Ascending aorta (tissue), 2 donors: ENCODE measurements at regions of chr11 and their contacts with region 1.

Region 1: GRCh38 chr11:77091146-77091940 is 11.3 kb upstream of the OMP start:
- DNase-seq: peak in 1 of 2 donors; percentile 88
- H3K4me3 ChIP-seq: no peak overlapping the region
- H3K27ac ChIP-seq: no peak overlapping the region
- H3K4me1 ChIP-seq: no peaks in the 10 kb centered on the region
- H3K27me3 ChIP-seq: no peaks in the 10 kb centered on the region
- CTCF ChIP-seq: peak; percentile 88 to 92 (median 92)

Region 2: GRCh38 chr11:76962583-76963416 is 128.5 kb before region 1 on chr11:
- intact Hi-C with region 1: no loop called
- DNase-seq: no peak
- H3K4me3 ChIP-seq: no peak overlapping the region
- H3K27ac ChIP-seq: no peak overlapping the region
- H3K4me1 ChIP-seq: no peaks in the 10 kb centered on the region
- H3K27me3 ChIP-seq: no peaks in the 10 kb centered on the region
- CTCF ChIP-seq: no peak

Region 3: DNA sequence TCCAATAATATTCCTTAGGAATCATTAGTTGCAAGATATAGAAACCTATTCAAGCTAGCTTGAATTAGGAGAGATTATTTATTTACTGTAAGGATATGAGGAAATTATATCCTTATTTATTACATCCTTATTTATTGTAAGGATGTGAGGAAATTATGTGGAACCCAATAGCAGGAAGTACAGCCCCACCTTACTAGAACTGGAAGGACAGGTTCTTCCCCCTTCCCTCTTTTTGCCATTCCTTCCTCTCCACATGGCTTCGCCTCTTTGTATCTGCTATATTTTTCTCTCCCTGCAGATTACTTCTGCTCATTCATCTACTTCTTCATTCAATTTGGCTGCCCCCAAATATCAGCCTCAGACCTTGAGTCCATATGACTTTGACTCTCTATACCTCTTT is 106.6 kb before region 1 on chr11:
- intact Hi-C with region 1: no loop called
- DNase-seq: no peak
- H3K4me3 ChIP-seq: no peak overlapping the region
- H3K27ac ChIP-seq: no peak overlapping the region
- H3K4me1 ChIP-seq: no peaks in the 10 kb centered on the region
- H3K27me3 ChIP-seq: no peaks in the 10 kb centered on the region
- CTCF ChIP-seq: no peak

Region 4: DNA sequence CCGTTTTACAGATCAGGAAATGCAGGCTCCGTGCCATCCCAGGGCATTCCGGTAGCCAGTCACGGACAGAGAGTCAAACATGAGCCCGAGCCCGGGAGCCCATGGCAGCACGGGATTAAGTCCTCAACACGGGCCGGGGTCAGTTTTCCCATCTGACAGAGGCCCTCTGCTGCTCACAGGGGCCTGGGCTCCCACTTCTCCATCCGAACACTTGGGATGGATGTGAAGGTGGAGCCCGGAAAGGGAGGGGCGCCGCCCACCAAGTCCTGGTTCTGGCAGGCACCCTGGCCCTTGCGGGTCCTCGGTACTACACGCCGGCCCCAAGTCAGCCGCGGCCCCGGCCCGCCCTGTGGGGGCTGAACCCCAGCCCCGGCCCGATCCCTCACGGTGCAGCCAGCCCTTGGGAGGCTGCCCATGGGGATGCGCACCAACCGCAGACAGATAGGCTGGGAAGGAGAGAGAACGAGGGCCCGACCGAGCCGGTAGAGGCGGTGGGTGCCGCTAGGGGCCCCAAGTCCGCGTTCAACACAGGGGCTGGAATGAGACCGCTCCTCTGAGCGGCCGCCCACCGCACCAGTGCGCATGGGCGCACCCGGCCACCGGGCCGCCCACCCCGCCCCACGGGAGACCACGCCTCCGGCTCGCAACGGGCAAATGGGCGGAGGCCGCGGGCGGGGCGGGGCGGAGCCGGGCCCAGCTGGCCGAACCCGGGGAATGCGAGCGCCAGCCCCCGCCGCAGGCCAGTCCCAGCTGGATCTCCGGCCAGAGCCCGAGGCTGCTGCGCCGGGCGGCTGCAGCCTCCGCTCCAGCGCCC is 24.9 kb before region 1 on chr11 and contains the start of gene CAPN5:
- intact Hi-C with region 1: loop called (anchors 1 kb)
- DNase-seq: peak; percentile 58 to 96
- H3K4me3 ChIP-seq: peak within 1 kb of the TSS; percentile 80 to 84
- H3K27ac ChIP-seq: peak within 1 kb of the TSS; percentile 93
- H3K4me1 ChIP-seq: peaks cover 0 to 19% of the 10 kb centered on the region in 2 donors
- H3K27me3 ChIP-seq: no peaks in the 10 kb centered on the region
- CTCF ChIP-seq: peak; percentile 22 to 34 (median 29)
- total RNA-seq, gene CAPN5: 7.9 TPM